Spleen (tissue), 13 donors: ENCODE measurements at regions of chr6 and their contacts with region 1.

Region 1: GRCh38 chr6:89940225-89941027 is 46.2 kb downstream of the GJA10 start:
- DNase-seq: no peak
- H3K4me3 ChIP-seq: no peak overlapping the region
- H3K27ac ChIP-seq: no peak overlapping the region
- H3K4me1 ChIP-seq: peaks cover 0 to 9% (median 0%) of the 10 kb centered on the region in 6 donors
- H3K27me3 ChIP-seq: no peaks in the 10 kb centered on the region
- CTCF ChIP-seq: peak; percentile 24 to 74 (median 68)
- POLR2A ChIP-seq: no peak

Region 2: GRCh38 chr6:90393232-90393884 is 452.9 kb after region 1 on chr6:
- intact Hi-C with region 1: loop called (anchors 10 kb)
- DNase-seq: peak; percentile 82
- H3K4me3 ChIP-seq: no peak overlapping the region
- H3K27ac ChIP-seq: peak overlapping the region in 1 of 8 donors; percentile 31
- H3K4me1 ChIP-seq: peaks cover 0 to 28% (median 17%) of the 10 kb centered on the region in 6 donors
- H3K27me3 ChIP-seq: no peaks in the 10 kb centered on the region
- CTCF ChIP-seq: peak; percentile 39 to 78 (median 73)
- POLR2A ChIP-seq: no peak

Region 3: DNA sequence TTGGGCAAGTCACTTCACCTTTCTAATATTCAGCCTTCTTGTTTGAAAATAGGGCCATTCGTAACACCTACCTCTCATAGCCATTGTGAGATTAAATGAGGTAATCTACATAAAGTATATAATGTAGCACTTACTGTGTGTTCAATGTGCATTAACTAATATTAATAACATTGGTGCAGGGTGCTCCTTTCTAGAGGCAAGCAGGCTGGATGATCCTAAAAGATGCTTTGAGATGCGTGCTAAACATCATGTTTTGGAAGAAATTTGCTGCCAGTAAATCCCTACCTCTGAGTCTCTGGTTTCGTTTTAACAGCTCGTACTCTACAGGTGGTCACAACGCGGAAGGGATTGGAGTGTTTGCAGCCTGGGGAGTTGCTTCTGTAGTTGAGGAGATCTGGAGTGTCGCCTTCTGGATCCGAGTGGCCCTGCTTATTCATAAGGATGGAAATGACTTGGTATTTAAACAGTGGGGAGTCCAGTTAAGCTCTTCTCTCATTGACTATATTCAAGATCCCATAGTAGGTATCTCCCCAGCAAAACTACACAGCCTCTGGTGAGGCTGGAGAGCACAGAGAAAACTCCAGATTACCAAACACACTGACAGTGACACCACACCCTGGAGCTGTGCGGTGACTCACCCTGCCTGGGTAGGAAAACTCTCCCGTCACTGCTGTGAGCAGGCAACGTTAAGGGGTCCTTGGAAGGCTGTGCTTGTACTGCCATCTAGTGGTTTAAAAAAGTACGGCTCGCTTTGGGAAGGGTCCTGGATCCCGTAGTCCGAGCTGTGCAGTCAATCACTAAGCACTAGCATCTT is 538.6 kb after region 1 on chr6:
- intact Hi-C with region 1: loop called (anchors 2 kb)
- DNase-seq: peak; percentile 88
- H3K4me3 ChIP-seq: no peak overlapping the region
- H3K27ac ChIP-seq: no peak overlapping the region
- H3K4me1 ChIP-seq: peaks cover 4 to 19% (median 11%) of the 10 kb centered on the region in 6 donors
- H3K27me3 ChIP-seq: no peaks in the 10 kb centered on the region
- CTCF ChIP-seq: peak; percentile 79 to 95 (median 89)
- POLR2A ChIP-seq: no peak